Activated CD8-positive, alpha-beta T cell treated with anti-CD3 and anti-CD28 coated beads for 36 hours (primary cell): ENCODE measurements at regions of chr3 and their contacts with region 1.

Region 1: DNA sequence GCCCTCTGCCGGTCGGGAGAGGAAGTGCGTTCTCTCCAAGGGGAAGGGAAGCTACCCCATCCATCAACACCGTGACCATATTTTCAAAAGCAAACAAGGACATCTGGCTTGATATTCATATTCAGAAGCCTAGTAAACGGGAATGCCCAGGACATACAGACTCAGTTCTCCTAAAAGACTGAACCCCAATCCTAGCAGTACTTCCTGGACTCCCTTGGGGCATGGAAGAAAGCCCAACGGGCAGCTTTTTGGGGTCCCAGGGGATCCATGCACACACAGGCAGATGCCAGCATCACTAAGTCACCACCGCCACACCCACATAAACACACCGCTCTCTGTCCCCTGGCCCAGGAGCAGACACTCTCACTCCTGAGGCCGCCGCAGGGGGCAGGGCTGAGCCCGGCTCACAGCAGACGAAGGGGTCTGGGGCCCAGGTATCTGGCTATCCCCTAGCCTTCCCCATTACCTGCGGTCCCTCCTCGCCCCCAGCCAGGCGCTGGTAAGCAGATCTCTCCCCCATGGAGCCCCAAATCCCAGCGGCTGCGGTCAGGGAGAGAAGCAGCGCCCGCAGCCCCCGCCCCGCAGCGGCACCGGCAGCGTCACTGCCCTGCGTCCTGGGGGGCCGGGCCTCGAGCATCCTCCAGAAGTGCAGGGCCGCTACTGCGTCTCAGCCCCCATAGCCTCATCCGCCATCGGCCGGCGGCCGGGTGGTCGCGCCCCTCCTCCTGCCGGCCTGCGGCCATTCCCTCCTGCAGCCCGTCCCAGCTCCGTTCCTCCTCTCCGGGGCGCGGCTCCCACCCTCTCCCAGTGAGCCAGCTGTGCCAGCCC is 13.4 kb downstream of the TNK2 start:
- DNase-seq: peak; percentile 87
- ATAC-seq: peak; percentile 80
- H3K4me3 Mint-ChIP-seq: peak overlapping the region; percentile 80
- H3K27ac Mint-ChIP-seq: peak overlapping the region; percentile 85
- H3K4me1 Mint-ChIP-seq: peaks cover 38% of the 10 kb centered on the region
- H3K27me3 Mint-ChIP-seq: no peaks in the 10 kb centered on the region
- CTCF ChIP-seq: peak; percentile 92

Region 2: GRCh38 chr3:195863121-195864006 is 31.6 kb before region 1 on chr3:
- CTCF ChIA-PET with region 1: interaction called, 131 read pairs
- POLR2A ChIA-PET with region 1: no interaction called
- intact Hi-C with region 1: loop called (anchors 2 kb)
- DNase-seq: peak; percentile 85
- ATAC-seq: peak; percentile 87
- H3K4me3 Mint-ChIP-seq: no peak overlapping the region
- H3K27ac Mint-ChIP-seq: no peak overlapping the region
- H3K4me1 Mint-ChIP-seq: peaks cover 12% of the 10 kb centered on the region
- H3K27me3 Mint-ChIP-seq: no peaks in the 10 kb centered on the region
- CTCF ChIP-seq: peak; percentile 89

Region 3: DNA sequence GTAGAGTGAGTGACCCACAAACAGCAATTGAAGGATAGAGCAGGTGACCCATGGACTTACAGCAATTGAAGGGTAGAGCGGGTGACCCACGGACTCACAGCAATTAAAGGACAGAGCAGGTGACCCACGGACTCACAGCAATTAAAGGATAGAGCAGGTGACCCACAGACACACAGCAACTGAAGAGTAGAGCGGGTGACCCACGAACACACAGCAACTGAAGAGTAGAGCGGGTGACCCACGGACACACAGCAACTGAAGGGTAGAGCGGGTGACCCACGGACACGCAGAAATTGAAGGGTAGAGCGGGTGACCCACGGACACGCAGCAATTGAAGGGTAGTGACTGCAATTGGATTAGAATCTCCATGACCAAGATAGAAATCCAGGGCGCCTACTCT is 23.2 kb after region 1 on chr3:
- CTCF ChIA-PET with region 1: interaction called, 119 read pairs
- POLR2A ChIA-PET with region 1: interaction called, 14 read pairs
- intact Hi-C with region 1: no loop called
- DNase-seq: no peak
- ATAC-seq: no peak
- H3K4me3 Mint-ChIP-seq: no peak overlapping the region
- H3K27ac Mint-ChIP-seq: no peak overlapping the region
- H3K4me1 Mint-ChIP-seq: peaks cover 9% of the 10 kb centered on the region
- H3K27me3 Mint-ChIP-seq: no peaks in the 10 kb centered on the region
- CTCF ChIP-seq: no peak